WTC11 (cell line): ENCODE measurements at regions of chr2 and their contacts with region 1.

Region 1: DNA sequence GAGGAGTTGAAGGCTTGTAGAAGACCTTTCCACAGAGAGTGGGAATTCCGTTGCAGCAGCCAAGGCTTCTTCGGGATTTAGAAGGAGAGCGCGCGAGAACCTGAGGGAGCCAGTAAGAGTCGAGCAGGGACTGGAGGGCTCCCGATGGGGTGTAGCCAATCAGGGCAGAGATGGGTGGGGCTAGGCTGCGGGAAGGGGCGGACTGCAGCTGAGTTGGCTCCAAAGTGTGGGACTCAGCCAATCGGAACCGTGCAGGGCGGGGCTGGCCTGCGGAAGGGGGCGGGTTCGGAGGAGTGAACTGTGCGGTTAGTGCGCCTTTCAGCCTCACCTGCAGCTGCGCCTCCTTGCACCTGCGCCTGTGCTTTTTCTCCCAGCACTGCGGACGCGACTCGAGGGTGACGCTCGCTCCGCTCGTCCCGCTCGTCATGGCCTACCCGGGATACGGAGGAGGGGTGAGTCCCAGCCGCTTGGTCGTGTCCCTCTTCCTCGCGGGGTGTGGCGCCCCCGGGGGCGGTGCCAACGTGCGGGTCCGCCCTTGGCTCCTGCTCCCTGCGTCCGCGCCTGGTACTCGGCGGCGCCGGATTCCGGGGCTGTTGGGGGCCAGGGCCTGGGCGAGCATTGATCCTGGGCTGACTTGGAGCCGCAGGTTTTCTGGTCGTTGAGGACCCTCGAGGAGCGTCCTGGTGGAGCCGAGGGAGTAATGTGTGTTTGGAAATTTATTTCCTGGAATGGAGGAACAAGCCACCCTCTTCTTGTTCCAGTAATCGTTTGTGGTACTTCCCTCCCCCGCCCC is at the start of gene GCA:
- DNase-seq: peak; percentile 99
- ATAC-seq: peak; percentile 100
- H3K4me3 Mint-ChIP-seq: peak within 1 kb of the TSS; percentile 97
- H3K27ac Mint-ChIP-seq: peak within 1 kb of the TSS; percentile 97
- H3K4me1 Mint-ChIP-seq: peaks cover 9% of the 10 kb centered on the region
- H3K27me3 Mint-ChIP-seq: peaks cover 19% of the 10 kb centered on the region
- CTCF ChIP-seq: no peak
- total RNA-seq, gene GCA: 42.1 to 46.2 TPM (median 44.5 TPM) in 3 replicates

Region 2: GRCh38 chr2:162327134-162327769 is 16.8 kb before region 1 on chr2:
- CTCF ChIA-PET with region 1: no interaction called
- POLR2A ChIA-PET with region 1: no interaction called
- DNase-seq: peak; percentile 32
- ATAC-seq: peak; percentile 91
- H3K4me3 Mint-ChIP-seq: no peak overlapping the region
- H3K27ac Mint-ChIP-seq: no peak overlapping the region
- H3K4me1 Mint-ChIP-seq: peaks cover 4% of the 10 kb centered on the region
- H3K27me3 Mint-ChIP-seq: no peaks in the 10 kb centered on the region
- CTCF ChIP-seq: peak; percentile 65

Region 3: GRCh38 chr2:162422891-162423290 is 78.9 kb after region 1 on chr2:
- CTCF ChIA-PET with region 1: no interaction called
- POLR2A ChIA-PET with region 1: interaction called, 12 read pairs
- DNase-seq: no peak
- ATAC-seq: peak; percentile 71
- H3K4me3 Mint-ChIP-seq: no peak overlapping the region
- H3K27ac Mint-ChIP-seq: no peak overlapping the region
- H3K4me1 Mint-ChIP-seq: peaks cover 22% of the 10 kb centered on the region
- H3K27me3 Mint-ChIP-seq: no peaks in the 10 kb centered on the region
- CTCF ChIP-seq: no peak